ENCODE measurements at regions of chr14 and their contacts with region 1.

Region 1: DNA sequence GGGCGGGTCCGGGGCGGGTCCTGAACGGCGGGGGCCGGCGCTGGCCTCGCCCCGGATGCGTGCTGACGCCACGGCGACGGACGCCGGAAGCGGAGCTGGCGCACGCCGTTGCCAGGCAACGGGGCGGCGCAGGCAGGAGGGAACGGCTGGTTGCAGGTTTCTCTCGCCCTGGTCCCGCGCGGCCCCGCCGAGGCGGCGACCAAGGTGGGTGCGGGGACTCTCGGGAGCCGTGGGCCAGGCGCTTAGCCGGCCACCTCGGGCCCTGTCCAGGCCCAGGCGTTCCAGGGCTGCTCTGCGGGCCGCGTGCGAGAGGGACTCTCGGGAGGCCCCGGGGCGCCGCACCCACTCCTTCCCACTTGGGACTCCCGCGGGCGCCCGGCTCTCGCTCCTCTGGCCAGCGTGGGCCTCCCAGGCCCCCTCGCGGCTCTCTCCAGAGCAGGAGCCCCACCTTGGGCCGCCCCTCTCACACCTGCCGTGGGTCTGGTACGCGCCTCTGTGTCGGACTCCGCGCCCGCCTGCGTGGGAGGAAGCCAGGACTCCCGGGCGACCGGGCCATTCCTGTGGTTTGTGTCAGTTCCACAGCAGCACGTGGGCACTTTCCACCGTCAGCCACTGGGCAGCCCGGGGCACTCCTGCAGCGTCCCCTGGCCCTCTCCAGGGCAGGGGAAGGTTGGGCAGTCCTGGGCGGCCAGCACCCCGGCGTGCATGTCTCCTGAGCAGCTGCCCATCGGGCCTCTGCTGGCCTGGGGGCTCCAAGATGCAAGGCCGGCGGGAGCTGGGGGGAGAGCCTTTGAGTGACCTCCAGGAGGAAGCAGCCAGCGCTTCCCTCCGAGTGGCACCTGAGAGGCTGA is at the start of gene CLBA1:
- DNase-seq: peak; percentile 95
- ATAC-seq: peak; percentile 92
- H3K4me3 ChIP-seq: peak within 1 kb of the TSS in 4 of 5 experiments; percentile 47 to 78 (median 62)
- H3K4me3 Mint-ChIP-seq: peak within 1 kb of the TSS; percentile 79
- H3K27ac ChIP-seq: peak within 1 kb of the TSS in 1 of 2 donors; percentile 73
- H3K27ac Mint-ChIP-seq: peak within 1 kb of the TSS; percentile 67
- H3K4me1 ChIP-seq: peaks cover 7 to 13% of the 10 kb centered on the region in 2 donors
- H3K4me1 Mint-ChIP-seq: peaks cover 7% of the 10 kb centered on the region
- H3K27me3 ChIP-seq: peaks cover 0 to 11% (median 5%) of the 10 kb centered on the region in 4 experiments
- H3K27me3 Mint-ChIP-seq: peaks cover 4% of the 10 kb centered on the region
- CTCF ChIP-seq: no peak
- total RNA-seq, gene CLBA1: 5.3 and 5.5 TPM in 2 replicates

Region 2: DNA sequence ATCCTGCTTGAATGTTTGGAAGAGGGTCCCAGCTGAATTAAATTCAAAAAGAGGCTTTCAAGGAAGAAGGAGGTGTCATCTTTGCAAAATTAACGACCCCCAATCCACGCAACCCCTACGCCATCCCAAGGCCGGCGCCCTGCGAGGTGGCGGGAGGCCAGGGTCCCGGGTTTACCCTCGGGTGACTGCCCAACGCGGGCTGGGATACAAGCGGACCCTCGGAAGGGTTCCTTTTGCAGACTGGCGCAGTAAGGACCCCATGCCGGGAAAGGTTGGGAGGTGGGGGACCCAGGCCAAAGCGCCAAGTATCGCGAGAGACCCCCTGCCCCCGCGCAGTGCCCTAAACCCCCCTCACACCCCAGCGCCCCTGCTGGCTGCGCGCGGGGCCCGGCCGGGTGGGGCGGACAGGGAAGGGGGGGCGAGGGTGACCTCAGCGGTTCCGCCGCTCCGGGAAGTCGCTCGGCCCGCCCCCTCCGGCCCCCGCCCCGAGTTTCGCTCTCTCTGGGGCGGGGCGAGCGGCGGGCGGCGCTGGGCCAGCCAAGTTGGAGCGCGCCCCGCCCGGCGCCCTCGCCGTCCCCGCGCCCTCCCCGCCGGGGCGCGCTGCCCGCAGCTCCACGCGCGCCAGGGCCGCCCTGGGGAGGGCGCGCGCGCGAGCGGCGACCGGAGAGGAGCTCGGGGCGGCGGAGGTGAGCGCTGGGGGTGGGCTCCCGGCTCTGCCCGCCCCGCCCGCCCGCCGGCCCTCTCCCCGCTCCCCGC is 185.7 kb before region 1 on chr14:
- CTCF ChIA-PET with region 1: no interaction called
- POLR2A ChIA-PET with region 1: no interaction called
- intact Hi-C with region 1: loop called (anchors 2 kb)
- DNase-seq: peak; percentile 91
- ATAC-seq: peak; percentile 76
- H3K4me3 ChIP-seq: peak overlapping the region in 4 of 5 experiments; percentile 49 to 85 (median 76)
- H3K4me3 Mint-ChIP-seq: peak overlapping the region; percentile 81
- H3K27ac ChIP-seq: peak overlapping the region; percentile 72 to 88
- H3K27ac Mint-ChIP-seq: peak overlapping the region; percentile 80
- H3K4me1 ChIP-seq: peaks cover 19 to 54% of the 10 kb centered on the region in 2 donors
- H3K4me1 Mint-ChIP-seq: peaks cover 44% of the 10 kb centered on the region
- H3K27me3 ChIP-seq: no peaks in the 10 kb centered on the region
- H3K27me3 Mint-ChIP-seq: no peaks in the 10 kb centered on the region
- CTCF ChIP-seq: peak; percentile 40

Region 3: GRCh38 chr14:104932676-104933631 is 52.9 kb before region 1 on chr14:
- CTCF ChIA-PET with region 1: no interaction called
- POLR2A ChIA-PET with region 1: interaction called, 3 read pairs
- intact Hi-C with region 1: loop called (anchors 2 kb)
- DNase-seq: peak; percentile 86
- ATAC-seq: peak; percentile 94
- H3K4me3 ChIP-seq: peak overlapping the region in 3 of 5 experiments; percentile 39 to 54 (median 42)
- H3K4me3 Mint-ChIP-seq: peak overlapping the region; percentile 63
- H3K27ac ChIP-seq: no peak overlapping the region
- H3K27ac Mint-ChIP-seq: no peak overlapping the region
- H3K4me1 ChIP-seq: peaks cover 3 to 21% of the 10 kb centered on the region in 2 donors
- H3K4me1 Mint-ChIP-seq: peaks cover 18% of the 10 kb centered on the region
- H3K27me3 ChIP-seq: peaks cover 0 to 7% (median 2%) of the 10 kb centered on the region in 4 experiments
- H3K27me3 Mint-ChIP-seq: peaks cover 4% of the 10 kb centered on the region
- CTCF ChIP-seq: peak; percentile 69

Region 4: GRCh38 chr14:105337966-105338741 is 352.3 kb after region 1 on chr14:
- CTCF ChIA-PET with region 1: no interaction called
- POLR2A ChIA-PET with region 1: no interaction called
- intact Hi-C with region 1: no loop called
- DNase-seq: no peak
- ATAC-seq: no peak
- H3K4me3 ChIP-seq: no peak overlapping the region
- H3K4me3 Mint-ChIP-seq: no peak overlapping the region
- H3K27ac ChIP-seq: no peak overlapping the region
- H3K27ac Mint-ChIP-seq: no peak overlapping the region
- H3K4me1 ChIP-seq: peaks cover 0 to 9% of the 10 kb centered on the region in 2 donors
- H3K4me1 Mint-ChIP-seq: peaks cover 14% of the 10 kb centered on the region
- H3K27me3 ChIP-seq: no peaks in the 10 kb centered on the region
- H3K27me3 Mint-ChIP-seq: no peaks in the 10 kb centered on the region
- CTCF ChIP-seq: no peak